ENCODE measurements at regions of chr12 and their contacts with region 1.

Region 1: DNA sequence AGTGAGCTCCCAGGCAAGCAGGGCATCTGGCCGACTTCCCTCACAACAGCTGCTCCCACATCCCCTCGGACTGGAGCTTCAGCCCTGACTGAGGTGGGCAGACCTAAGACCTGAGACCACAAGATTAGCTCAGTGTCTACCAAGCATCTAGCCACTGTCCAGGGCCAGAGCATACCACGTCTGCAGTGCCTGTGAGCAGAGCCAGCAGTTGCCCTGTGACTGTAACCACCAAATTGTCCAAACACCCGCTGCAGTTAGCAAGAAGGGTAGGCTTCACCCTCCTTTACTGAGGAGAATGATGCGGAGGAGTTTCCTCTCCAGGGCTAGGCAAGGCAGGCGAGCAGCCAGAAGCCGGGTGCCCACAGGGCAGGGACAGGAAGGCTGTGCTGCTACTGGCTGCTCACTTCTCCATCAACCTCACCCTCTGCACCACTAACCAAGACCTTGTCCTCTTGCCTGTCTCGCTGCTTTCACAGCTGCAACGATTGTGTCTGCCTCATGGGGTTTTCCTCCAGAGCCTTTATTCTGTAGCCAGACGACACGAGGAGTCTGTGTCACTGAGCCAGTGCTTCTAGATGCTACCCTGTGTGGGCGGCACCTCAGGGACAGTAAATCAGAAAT is 53.9 kb downstream of the ANAPC7 start:
- DNase-seq: no peak
- ATAC-seq: peak; percentile 3; the same call in 2 of the 3 replicates
- H3K4me3 ChIP-seq: no peak overlapping the region
- H3K27ac ChIP-seq: 0 out of 3 replicates have a peak overlapping the region, but pooled peaks have one; percentile 12
- H3K4me1 ChIP-seq: peaks cover 8 to 19% of the 10 kb centered on the region in 2 experiments; a peak in 4 of 5 replicates
- H3K27me3 ChIP-seq: no peaks in the 10 kb centered on the region
- CTCF ChIP-seq: no peak
- EP300 ChIP-seq: no peak
- POLR2A ChIP-seq: peak; percentile 68
- RAD21 ChIP-seq: no peak

Region 2: GRCh38 chr12:110338754-110339153 is 10.9 kb before region 1 on chr12:
- CTCF ChIA-PET with region 1: no interaction called
- POLR2A ChIA-PET with region 1: interaction called, 18 read pairs
- in situ Hi-C with region 1: no loop called
- intact Hi-C with region 1: no loop called
- DNase-seq: peak; percentile 15 to 59 (median 40)
- ATAC-seq: peak; percentile 75
- H3K4me3 ChIP-seq: no peak overlapping the region
- H3K27ac ChIP-seq: no peak overlapping the region
- H3K4me1 ChIP-seq: no peaks in the 10 kb centered on the region
- H3K27me3 ChIP-seq: no peaks in the 10 kb centered on the region
- CTCF ChIP-seq: peak; percentile 42 to 51 (median 45); a peak in 5 of 6 replicates
- EP300 ChIP-seq: no peak
- POLR2A ChIP-seq: no peak
- RAD21 ChIP-seq: peak in 1 of 2 experiments; percentile 52; a peak in 2 of 4 replicates

Region 3: DNA sequence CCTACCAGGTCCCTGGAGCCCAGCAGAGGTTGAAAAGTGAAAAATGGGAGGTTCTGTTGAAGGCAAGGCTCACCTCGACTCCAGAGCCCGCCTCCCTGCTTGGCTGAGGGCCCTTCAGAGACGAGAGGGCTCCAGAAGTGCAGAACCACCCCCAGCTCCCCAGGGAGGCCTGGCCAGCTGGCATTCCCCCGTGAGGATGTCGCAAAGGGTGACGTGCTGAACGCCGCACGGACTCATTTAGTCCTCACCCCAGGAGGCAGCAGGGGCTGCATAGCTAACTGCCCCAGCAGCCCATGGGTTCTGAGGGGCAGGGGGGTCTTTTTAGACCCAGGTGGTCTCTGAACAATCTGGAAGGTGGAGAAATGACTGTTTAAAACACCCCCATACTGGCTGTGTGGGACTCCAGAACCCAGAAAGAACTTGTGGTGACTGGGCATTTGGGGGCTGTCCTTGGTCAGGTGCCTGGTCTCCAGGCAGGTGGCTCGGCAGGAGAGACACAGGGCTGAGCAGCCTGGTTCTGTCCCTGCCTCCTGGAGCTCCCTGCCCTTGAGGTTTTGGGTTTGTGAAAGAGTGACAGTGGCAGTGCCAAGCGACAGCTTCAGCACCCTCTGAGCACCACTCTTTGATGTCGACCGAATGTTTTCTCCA is 21.9 kb after region 1 on chr12:
- CTCF ChIA-PET with region 1: no interaction called
- POLR2A ChIA-PET with region 1: interaction called, 10 read pairs
- in situ Hi-C with region 1: no loop called
- intact Hi-C with region 1: no loop called
- DNase-seq: no peak
- ATAC-seq: peak; percentile 14
- H3K4me3 ChIP-seq: no peak overlapping the region
- H3K27ac ChIP-seq: no peak overlapping the region
- H3K4me1 ChIP-seq: peaks cover 0 to 6% of the 10 kb centered on the region in 2 experiments; a peak in 2 of 5 replicates
- H3K27me3 ChIP-seq: no peaks in the 10 kb centered on the region
- CTCF ChIP-seq: no peak
- EP300 ChIP-seq: no peak
- POLR2A ChIP-seq: 0 out of 2 replicates have a peak, but pooled peaks have one; percentile 26
- RAD21 ChIP-seq: no peak

Region 4: DNA sequence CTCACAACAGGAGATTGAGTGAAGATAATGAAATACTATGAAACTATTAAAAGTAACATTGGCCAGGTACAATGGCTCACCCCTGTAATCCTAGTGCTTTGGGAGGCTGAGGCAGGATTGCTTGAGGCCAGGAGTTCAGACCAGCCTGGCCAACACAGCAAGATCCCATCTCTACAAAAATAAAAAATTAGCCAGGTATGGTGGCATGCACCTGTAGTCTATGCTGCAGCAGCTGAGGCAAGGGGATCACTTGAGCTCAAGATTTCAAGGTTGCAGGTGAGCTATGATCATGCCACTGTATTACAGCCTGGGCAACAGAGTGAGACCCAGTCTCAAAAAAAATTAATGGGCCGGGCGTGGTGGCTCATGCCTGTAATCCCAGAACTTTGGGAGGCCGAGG is 167.4 kb after region 1 on chr12:
- CTCF ChIA-PET with region 1: no interaction called
- POLR2A ChIA-PET with region 1: no interaction called
- in situ Hi-C with region 1: no loop called
- intact Hi-C with region 1: no loop called
- DNase-seq: no peak
- ATAC-seq: no peak
- H3K4me3 ChIP-seq: no peak overlapping the region
- H3K27ac ChIP-seq: no peak overlapping the region
- H3K4me1 ChIP-seq: peaks cover 3% of the 10 kb centered on the region in 2 experiments; a peak in 3 of 5 replicates
- H3K27me3 ChIP-seq: no peaks in the 10 kb centered on the region
- CTCF ChIP-seq: no peak
- EP300 ChIP-seq: no peak
- POLR2A ChIP-seq: no peak
- RAD21 ChIP-seq: no peak

Measured in K562 (cell line).